Mammary epithelial cell (primary cell): ENCODE measurements at regions of chr7 and their contacts with region 1.

Region 1: DNA sequence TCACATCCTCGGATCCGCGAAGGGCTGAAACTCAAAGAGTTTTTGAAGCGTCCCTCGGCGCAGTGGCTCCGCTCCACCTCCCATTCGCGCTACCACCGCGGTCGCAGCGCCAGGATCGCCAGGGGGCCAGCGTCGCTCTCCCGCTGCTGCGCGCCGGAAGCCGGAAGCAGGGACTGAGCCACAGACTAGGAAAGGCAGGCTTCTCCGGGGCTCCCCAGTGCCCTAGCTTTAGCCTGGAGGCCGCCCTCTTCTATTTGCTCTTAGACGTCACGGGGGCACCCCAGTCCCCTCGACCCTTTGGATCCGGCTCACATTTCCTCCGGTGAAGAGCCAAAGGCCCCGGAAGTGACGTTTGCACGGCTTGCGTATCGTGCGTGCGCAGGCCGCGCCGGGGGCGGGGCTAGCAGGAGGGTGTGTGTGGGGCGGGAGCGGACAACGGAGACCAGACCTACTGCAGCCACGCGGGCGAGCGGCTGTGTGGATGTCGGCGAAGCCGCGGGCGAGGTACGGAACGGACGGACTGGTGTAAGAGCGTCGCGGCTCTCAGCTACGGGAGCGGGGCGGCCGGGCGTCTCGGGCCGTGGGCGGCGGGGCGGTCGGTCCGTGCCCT is 25.5 kb downstream of the KCTD7 start:
- DNase-seq: peak; percentile 98
- H3K4me3 ChIP-seq: peak overlapping the region; percentile 62 to 95 (median 87)
- H3K27ac ChIP-seq: peak overlapping the region; percentile 80
- H3K4me1 ChIP-seq: peaks cover 11% of the 10 kb centered on the region
- H3K27me3 ChIP-seq: no peaks in the 10 kb centered on the region
- CTCF ChIP-seq: peak in 1 of 2 donors; percentile 43

Region 2: GRCh38 chr7:66557608-66558143 is 96.6 kb before region 1 on chr7:
- CTCF ChIA-PET with region 1: no interaction called
- dilution Hi-C with region 1: no loop called
- in situ Hi-C with region 1: no loop called
- intact Hi-C with region 1: loop called (anchors 2 kb)
- DNase-seq: peak; percentile 22
- H3K4me3 ChIP-seq: no peak overlapping the region
- H3K27ac ChIP-seq: no peak overlapping the region
- H3K4me1 ChIP-seq: no peaks in the 10 kb centered on the region
- H3K27me3 ChIP-seq: no peaks in the 10 kb centered on the region
- CTCF ChIP-seq: peak; percentile 88 to 94

Region 3: DNA sequence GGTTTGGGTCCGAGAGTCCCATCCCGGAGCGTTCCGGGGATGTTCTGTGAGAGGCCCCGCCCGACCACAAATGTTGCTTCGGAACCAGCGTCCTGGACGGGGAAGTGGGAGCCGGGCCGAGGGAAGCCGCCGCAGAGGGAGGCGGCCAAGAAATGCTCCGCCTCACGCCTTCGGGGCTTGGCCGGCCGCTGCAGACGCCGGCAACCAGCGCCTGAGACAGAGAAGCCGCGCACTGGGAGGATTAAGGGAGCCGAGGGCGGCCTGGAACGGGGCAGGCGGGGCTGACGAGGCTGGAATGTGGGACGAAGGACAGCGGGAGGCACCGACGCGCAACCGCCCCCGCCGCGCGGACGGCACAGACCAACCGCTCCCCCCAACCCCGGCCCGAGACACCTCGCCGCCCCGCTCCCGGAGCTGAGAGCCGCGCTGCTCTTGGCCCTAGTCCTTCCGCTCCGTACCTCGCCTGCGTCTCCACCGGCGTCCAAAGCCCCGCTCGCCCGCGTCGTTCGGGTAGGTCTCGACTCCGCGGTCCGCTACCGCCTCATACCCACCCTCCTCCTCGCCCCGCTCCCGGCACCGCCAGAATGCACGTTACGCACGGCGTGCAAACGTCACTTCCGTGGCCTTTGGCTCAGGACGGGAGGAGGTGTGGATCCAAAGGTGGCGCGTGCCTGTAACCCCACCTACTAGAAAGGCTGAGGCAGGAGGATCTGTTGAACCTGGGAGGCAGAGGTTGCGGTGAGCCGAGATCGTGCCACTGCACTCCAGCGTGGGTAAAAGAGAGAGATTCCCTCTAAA is 62.2 kb before region 1 on chr7:
- CTCF ChIA-PET with region 1: no interaction called
- dilution Hi-C with region 1: no loop called
- in situ Hi-C with region 1: no loop called
- intact Hi-C with region 1: loop called (anchors 2 kb)
- DNase-seq: peak; percentile 91
- H3K4me3 ChIP-seq: peak overlapping the region; percentile 71 to 96 (median 94)
- H3K27ac ChIP-seq: peak overlapping the region; percentile 92
- H3K4me1 ChIP-seq: peaks cover 16% of the 10 kb centered on the region
- H3K27me3 ChIP-seq: no peaks in the 10 kb centered on the region
- CTCF ChIP-seq: no peak

Region 4: GRCh38 chr7:66628361-66629140 is 25.7 kb before region 1 on chr7 and contains the start of gene KCTD7:
- CTCF ChIA-PET with region 1: interaction called, 3 read pairs
- dilution Hi-C with region 1: no loop called
- in situ Hi-C with region 1: no loop called
- intact Hi-C with region 1: loop called (anchors 2 kb)
- DNase-seq: peak; percentile 99
- H3K4me3 ChIP-seq: peak within 1 kb of the TSS; percentile 72 to 85 (median 76)
- H3K27ac ChIP-seq: peak within 1 kb of the TSS; percentile 82
- H3K4me1 ChIP-seq: no peaks in the 10 kb centered on the region
- H3K27me3 ChIP-seq: no peaks in the 10 kb centered on the region
- CTCF ChIP-seq: no peak
- total RNA-seq, gene KCTD7: 3.6 to 7.3 TPM

Region 5: GRCh38 chr7:66681491-66682349 is 27.5 kb after region 1 on chr7:
- CTCF ChIA-PET with region 1: no interaction called
- dilution Hi-C with region 1: no loop called
- in situ Hi-C with region 1: no loop called
- intact Hi-C with region 1: loop called (anchors 2 kb)
- DNase-seq: peak; percentile 95
- H3K4me3 ChIP-seq: peak overlapping the region; percentile 97 to 99 (median 98)
- H3K27ac ChIP-seq: peak overlapping the region; percentile 85
- H3K4me1 ChIP-seq: peaks cover 11% of the 10 kb centered on the region
- H3K27me3 ChIP-seq: no peaks in the 10 kb centered on the region
- CTCF ChIP-seq: no peak

Region 6: GRCh38 chr7:66920769-66921395 is 266.7 kb after region 1 on chr7 and contains the start of gene TMEM248:
- CTCF ChIA-PET with region 1: no interaction called
- dilution Hi-C with region 1: loop called (anchors 10 kb)
- in situ Hi-C with region 1: no loop called
- intact Hi-C with region 1: no loop called
- DNase-seq: peak; percentile 81
- H3K4me3 ChIP-seq: peak within 1 kb of the TSS; percentile 82 to 94 (median 84)
- H3K27ac ChIP-seq: peak within 1 kb of the TSS; percentile 82
- H3K4me1 ChIP-seq: peaks cover 9% of the 10 kb centered on the region
- H3K27me3 ChIP-seq: no peaks in the 10 kb centered on the region
- CTCF ChIP-seq: no peak
- total RNA-seq, gene TMEM248: 76.2 to 113 TPM